ENCODE measurements at regions of chr12 and their contacts with region 1.

Region 1: DNA sequence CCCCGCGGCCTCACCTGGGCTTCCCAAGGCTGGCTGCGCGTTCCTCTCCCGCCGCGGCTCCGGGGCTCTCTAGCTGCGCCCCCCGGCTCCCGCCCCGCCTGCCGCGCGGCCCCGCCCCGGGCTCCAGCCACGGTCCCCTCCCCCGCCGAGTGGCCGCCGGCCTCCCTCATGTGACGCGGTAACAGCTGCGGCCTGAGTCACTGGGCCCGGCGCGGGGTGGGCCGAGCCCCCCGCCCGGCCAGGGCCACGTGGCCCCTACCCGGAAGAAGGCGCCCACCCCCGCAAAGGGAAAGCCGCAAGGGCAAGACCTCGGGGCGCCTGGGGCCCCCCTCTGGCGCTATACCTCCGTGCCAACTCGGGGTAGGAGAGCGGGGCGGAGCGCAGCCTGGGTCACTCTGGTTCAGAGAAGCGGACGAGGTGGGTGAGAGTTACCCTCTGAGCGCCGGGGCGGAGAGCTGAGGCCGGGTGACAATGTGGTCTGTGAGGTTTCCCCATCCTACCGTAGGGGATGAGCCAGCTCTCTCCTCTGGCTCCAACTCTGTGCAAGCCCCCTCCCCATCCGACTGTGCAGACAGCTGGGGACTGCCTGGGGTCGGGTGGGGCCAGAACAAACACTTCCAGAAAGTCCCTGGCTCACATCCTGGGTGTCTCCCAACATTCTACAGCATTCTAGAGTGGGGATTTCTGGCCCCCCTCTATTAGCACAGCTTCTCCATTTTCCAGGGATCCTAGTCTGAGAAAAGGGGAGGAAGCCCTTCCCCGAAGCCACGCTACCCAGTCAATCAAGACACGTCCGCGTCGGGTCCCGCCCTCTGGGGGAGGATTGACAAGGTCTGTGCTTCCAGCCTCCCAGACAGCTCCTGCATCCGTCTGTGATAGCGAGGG is at the start of gene CD63:
- DNase-seq: peak; percentile 71
- ATAC-seq: peak; percentile 67
- H3K4me3 ChIP-seq: peak within 1 kb of the TSS; percentile 55 to 91 (median 77)
- H3K4me3 Mint-ChIP-seq: peak within 1 kb of the TSS; percentile 88
- H3K27ac ChIP-seq: peak within 1 kb of the TSS; percentile 64 to 80
- H3K27ac Mint-ChIP-seq: peak within 1 kb of the TSS; percentile 92
- H3K4me1 ChIP-seq: peaks cover 21 to 36% of the 10 kb centered on the region in 2 donors
- H3K4me1 Mint-ChIP-seq: peaks cover 41% of the 10 kb centered on the region
- H3K27me3 ChIP-seq: no peaks in the 10 kb centered on the region
- H3K27me3 Mint-ChIP-seq: no peaks in the 10 kb centered on the region
- CTCF ChIP-seq: no peak
- total RNA-seq, gene CD63: 104 TPM in 2 replicates

Region 2: DNA sequence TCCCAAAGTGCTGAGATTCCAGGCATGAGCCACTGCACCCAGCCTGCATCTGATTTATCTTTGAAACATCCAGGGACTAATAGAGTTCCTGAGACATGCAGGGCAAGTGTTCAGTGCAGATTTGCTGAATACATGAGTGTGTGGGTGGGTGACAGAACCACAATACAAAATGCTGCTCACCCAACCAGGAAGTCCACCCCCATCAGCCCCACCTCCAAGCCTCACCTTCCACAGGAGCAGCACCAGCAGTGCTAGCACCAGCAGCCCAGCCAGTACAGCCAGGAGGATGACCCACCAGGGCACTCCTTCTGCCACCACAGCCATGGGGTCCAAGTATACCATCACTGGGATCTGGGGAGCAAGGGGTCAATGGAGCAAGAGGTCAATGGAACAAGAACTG is 41.4 kb before region 1 on chr12:
- CTCF ChIA-PET with region 1: no interaction called
- POLR2A ChIA-PET with region 1: no interaction called
- intact Hi-C with region 1: no loop called
- DNase-seq: no peak
- ATAC-seq: no peak
- H3K4me3 ChIP-seq: no peak overlapping the region
- H3K4me3 Mint-ChIP-seq: no peak overlapping the region
- H3K27ac ChIP-seq: no peak overlapping the region
- H3K27ac Mint-ChIP-seq: no peak overlapping the region
- H3K4me1 ChIP-seq: peaks cover 10 to 24% of the 10 kb centered on the region in 2 donors
- H3K4me1 Mint-ChIP-seq: peaks cover 18% of the 10 kb centered on the region
- H3K27me3 ChIP-seq: no peaks in the 10 kb centered on the region
- H3K27me3 Mint-ChIP-seq: no peaks in the 10 kb centered on the region
- CTCF ChIP-seq: no peak

Region 3: GRCh38 chr12:55715833-55716581 is 13.2 kb before region 1 on chr12 and contains the start of gene BLOC1S1:
- CTCF ChIA-PET with region 1: interaction called, 147 read pairs
- POLR2A ChIA-PET with region 1: interaction called, 6 read pairs
- intact Hi-C with region 1: loop called (anchors 1 kb)
- DNase-seq: peak; percentile 95
- ATAC-seq: peak; percentile 95
- H3K4me3 ChIP-seq: peak within 1 kb of the TSS; percentile 86 to 98 (median 97)
- H3K4me3 Mint-ChIP-seq: peak within 1 kb of the TSS; percentile 98
- H3K27ac ChIP-seq: peak within 1 kb of the TSS; percentile 81 to 84
- H3K27ac Mint-ChIP-seq: peak within 1 kb of the TSS; percentile 99
- H3K4me1 ChIP-seq: peaks cover 16 to 30% of the 10 kb centered on the region in 2 donors
- H3K4me1 Mint-ChIP-seq: peaks cover 38% of the 10 kb centered on the region
- H3K27me3 ChIP-seq: no peaks in the 10 kb centered on the region
- H3K27me3 Mint-ChIP-seq: no peaks in the 10 kb centered on the region
- CTCF ChIP-seq: no peak
- total RNA-seq, gene BLOC1S1: 67.1 and 71.1 TPM in 2 replicates

Region 4: DNA sequence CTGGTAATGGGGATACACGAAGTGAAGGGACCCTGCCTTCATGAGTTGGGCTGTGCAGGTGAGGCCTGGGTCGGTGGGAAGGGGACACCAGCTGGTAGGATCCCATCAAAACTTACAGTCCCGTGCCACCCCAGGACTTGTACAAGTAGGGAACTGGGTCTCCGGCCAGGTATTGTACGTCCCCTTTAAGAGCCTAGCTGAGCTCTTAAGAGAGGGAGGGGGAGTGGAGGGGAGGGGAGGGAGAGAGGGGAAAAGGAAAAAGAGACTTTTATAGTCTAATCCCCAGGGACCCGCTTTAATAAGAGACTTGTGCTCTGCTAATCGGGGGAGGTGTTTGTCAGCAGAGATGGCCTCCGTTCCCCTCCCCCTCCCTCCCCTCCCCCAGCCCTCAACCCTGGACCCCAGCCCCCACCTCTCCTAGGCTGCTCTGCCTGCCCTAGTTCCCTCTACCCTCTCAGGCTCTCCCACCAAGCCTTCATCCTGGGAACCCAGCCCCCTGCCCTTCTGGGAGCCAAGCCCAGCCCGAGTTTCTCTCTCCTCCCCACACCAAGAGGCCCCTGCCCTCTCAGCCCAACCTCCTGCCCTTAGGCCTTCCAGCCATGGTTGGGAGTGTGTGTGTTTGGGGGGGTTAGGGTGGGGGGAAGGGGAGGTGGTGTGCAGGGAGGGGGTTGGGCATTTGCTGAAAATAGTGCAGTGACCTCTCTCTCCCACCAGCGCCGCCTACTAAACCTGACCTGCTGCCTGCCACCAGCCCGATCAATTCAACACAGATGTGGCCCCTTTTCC is 16.4 kb after region 1 on chr12:
- CTCF ChIA-PET with region 1: interaction called, 14 read pairs
- POLR2A ChIA-PET with region 1: no interaction called
- intact Hi-C with region 1: no loop called
- DNase-seq: no peak
- ATAC-seq: peak; percentile 28
- H3K4me3 ChIP-seq: peak overlapping the region in 2 of 5 experiments; percentile 21 to 27
- H3K4me3 Mint-ChIP-seq: peak overlapping the region; percentile 97
- H3K27ac ChIP-seq: no peak overlapping the region
- H3K27ac Mint-ChIP-seq: peak overlapping the region; percentile 86
- H3K4me1 ChIP-seq: peaks cover 20 to 32% of the 10 kb centered on the region in 2 donors
- H3K4me1 Mint-ChIP-seq: peaks cover 37% of the 10 kb centered on the region
- H3K27me3 ChIP-seq: no peaks in the 10 kb centered on the region
- H3K27me3 Mint-ChIP-seq: no peaks in the 10 kb centered on the region
- CTCF ChIP-seq: no peak

Region 5: GRCh38 chr12:55797068-55797467 is 67.9 kb after region 1 on chr12:
- CTCF ChIA-PET with region 1: interaction called, 5 read pairs
- POLR2A ChIA-PET with region 1: no interaction called
- intact Hi-C with region 1: loop called (anchors 2 kb)
- DNase-seq: peak; percentile 34
- ATAC-seq: no peak
- H3K4me3 ChIP-seq: no peak overlapping the region
- H3K4me3 Mint-ChIP-seq: no peak overlapping the region
- H3K27ac ChIP-seq: no peak overlapping the region
- H3K27ac Mint-ChIP-seq: no peak overlapping the region
- H3K4me1 ChIP-seq: no peaks in the 10 kb centered on the region
- H3K4me1 Mint-ChIP-seq: no peaks in the 10 kb centered on the region
- H3K27me3 ChIP-seq: no peaks in the 10 kb centered on the region
- H3K27me3 Mint-ChIP-seq: no peaks in the 10 kb centered on the region
- CTCF ChIP-seq: peak; percentile 44

Region 6: DNA sequence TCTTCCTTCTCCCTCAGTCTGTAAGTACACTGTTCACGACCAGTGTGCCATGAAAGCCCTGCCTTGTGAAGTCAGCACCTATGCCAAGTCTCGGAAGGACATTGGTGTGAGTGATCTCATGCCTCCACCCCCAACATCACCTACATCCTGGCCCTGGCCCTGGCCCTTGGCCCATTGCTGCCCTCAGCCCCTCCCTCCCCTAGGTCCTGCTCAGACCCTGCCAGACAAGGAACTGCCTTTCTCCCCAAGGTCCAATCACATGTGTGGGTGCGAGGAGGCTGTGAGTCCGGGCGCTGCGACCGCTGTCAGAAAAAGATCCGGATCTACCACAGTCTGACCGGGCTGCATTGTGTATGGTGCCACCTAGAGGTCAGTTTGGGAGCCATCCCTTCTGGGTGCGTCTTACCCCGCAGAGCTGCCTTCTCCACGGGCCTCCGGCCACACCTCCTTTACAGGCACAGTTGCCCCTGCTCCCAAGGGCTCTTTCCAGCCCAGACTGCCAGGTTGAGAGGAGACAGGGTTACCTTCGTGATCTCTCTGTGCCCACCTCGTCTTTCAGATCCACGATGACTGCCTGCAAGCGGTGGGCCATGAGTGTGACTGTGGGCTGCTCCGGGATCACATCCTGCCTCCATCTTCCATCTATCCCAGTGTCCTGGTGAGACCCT is 211.0 kb after region 1 on chr12:
- CTCF ChIA-PET with region 1: interaction called, 13 read pairs
- POLR2A ChIA-PET with region 1: no interaction called
- intact Hi-C with region 1: no loop called
- DNase-seq: peak; percentile 89
- ATAC-seq: peak; percentile 99
- H3K4me3 ChIP-seq: no peak overlapping the region
- H3K4me3 Mint-ChIP-seq: peak overlapping the region; percentile 13
- H3K27ac ChIP-seq: peak overlapping the region; percentile 35 to 57
- H3K27ac Mint-ChIP-seq: peak overlapping the region; percentile 84
- H3K4me1 ChIP-seq: peaks cover 7 to 12% of the 10 kb centered on the region in 2 donors
- H3K4me1 Mint-ChIP-seq: peaks cover 19% of the 10 kb centered on the region
- H3K27me3 ChIP-seq: no peaks in the 10 kb centered on the region
- H3K27me3 Mint-ChIP-seq: no peaks in the 10 kb centered on the region
- CTCF ChIP-seq: peak; percentile 85